ENCODE measurements at regions of chr4 and their contacts with region 1.

Region 1: DNA sequence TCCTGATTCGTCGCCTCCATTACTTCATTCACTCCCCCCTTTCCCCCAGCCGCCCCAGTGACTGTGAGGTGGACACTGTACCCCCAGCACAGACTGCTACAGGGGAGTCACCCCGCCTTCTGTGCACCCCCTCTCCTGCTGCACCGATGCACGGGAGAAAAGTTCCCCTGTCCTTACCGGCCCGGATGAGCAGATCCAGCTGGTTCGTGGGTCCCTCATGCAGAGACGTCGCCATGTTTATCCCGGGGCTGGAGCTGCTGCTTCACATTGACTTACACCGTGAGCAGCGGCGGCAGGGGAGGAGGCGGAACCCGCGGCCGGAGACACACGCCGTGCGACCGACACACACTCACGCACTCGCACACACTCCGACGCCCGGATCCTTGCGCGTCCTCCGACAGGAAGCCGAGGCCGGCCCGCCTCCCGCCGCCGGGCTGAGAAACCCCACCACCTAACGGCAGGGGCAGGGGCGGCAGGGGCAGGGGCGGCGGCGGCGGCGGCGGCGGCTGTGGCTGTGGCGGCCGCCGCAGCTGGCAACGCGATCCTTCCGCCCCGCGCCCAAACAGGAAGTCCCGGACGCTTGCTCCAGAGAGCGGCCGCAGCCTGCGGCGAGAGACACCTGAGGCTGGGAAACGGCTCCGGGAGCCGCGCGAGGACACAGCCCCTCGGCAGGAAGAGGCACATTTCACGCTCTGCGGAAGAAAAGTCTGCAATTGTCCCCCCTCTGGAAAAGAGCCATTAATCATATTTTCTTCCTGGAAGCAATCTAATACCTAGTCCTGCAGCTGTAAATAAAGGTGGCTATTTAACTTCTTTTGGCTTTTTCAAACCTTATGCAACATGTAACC is 68.6 kb downstream of the NOCT start:
- DNase-seq: peak; percentile 71 to 94 (median 86)

Region 2: DNA sequence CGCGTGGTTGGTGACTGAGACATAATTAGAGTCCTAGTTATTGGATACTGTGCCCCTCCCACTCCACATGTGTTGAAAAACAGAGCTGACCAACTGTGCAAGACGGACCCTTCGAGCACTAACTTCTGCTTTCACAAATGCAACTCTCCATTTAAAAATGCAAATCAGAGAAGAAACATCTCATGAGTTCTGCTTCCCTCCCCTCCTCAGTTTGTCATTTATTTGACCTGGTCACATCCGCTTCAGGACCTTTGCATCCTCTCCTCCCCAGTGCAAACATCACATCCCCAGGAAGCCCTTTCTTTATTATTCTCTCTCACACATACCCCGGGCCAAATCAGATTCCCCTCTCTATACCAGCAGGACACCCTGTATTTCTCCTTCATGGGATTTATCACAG is 106.7 kb before region 1 on chr4:
- intact Hi-C with region 1: no loop called
- DNase-seq: no peak

Region 3: DNA sequence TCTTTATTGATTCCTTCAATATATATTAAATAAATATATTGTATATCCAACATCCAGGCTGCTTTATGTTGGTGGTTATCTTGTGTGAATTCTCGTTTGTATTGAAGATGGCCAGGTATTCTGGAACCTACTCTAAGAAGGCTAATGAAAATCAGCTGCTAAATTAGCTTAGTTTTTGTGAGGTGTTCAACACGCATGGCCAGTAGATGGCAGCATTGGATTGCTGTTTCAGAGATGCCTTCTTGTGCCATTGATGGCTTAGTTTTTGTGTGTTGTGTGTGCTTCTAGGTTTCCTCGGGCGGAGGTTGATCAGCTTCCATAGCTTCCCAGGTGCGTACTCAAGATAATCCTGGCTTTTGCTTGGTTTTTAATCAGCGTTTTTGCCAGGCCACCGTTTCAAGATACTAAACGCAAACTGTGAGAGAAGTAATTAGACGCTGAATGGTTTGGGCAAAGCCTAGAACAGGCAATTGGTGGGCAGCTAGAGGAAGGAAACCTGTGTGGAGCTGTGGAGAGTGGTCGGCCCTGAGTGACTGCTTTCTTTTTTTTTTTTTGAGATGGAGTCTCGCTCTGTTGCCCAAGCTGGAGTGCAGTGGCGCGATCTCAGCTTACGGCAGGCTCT is 53.5 kb before region 1 on chr4:
- intact Hi-C with region 1: loop called (anchors 5 kb)
- DNase-seq: peak in 41 of 42 donors; percentile 60 to 92 (median 81)

Region 4: DNA sequence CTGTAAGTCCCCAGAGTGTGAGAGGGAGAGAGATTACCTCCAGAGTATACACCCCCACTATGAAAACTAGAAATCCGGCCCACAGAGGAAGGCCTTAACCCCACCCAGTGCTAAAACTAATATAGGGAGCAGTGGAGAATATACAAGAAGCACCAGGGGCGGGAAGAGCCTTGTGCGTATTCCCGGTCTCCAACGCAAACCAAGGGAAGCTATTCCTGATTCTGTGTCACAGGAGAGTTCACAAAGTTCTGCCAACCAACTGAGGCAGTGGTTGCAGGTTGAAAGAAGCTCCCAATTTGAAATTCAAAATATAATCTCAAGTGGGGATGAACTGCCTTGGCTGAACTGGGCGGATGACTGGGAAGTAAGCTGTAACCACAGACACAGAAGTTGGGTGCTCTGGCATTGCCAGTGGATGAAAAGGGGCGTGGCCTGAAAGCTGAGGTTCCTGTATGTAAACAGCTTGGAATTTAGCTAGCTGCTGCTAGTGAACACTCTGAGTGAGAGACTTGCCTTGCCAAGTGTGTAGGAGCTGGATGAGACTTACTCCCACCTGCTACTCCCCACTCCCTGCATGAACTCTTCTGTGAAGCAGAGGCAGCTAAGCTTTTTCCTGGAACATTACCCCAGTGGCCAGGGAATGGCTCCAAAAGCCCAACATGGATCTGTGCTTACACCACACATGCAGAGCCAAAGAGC is 60.1 kb after region 1 on chr4:
- intact Hi-C with region 1: no loop called
- DNase-seq: peak in 34 of 42 donors; percentile 7 to 78 (median 32)

Region 5: DNA sequence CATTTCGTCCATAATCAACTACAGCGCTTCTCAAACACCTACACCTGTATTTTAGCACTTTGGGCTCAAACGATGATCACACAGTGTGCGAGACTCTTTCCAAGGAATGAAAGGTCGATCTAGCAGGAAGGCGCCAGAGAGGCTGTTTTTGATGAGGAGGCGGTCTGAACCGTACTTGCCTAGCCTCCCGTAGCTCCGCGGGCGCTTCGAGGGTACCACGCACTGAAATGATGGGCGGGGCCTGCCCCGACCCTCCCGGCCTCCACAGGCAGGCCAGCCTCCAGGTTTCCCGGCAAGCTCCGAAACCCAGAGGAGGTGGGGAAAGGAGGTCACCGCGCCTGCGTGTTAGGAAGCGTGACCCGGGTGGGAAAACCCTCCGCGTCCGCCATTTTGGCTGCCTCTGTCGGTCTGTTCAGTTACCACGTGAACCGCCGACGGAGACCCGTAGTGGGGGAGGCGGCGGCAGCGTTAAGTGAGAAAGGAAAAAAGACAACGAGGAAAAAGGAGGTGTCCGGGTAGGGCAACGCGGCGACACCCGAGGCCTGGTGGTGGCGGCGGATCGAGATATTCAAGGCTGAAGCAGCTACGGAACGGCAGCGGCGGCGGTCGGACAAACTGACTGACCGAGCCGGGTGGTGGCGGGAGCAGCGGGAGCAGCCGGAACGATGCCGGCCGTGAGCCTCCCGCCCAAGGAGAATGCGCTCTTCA is 217.1 kb after region 1 on chr4 and contains the start of gene NAA15:
- intact Hi-C with region 1: loop called (anchors 5 kb)
- DNase-seq: peak; percentile 93 to 99 (median 97)

Region 6: GRCh38 chr4:139554893-139555704 is 470.9 kb after region 1 on chr4:
- intact Hi-C with region 1: loop called (anchors 10 kb)
- DNase-seq: peak; percentile 70 to 94 (median 86)

Measured in head of caudate nucleus (tissue), 42 donors.